A673 (cell line): ENCODE measurements at regions of chr19 and their contacts with region 1.

Region 1: DNA sequence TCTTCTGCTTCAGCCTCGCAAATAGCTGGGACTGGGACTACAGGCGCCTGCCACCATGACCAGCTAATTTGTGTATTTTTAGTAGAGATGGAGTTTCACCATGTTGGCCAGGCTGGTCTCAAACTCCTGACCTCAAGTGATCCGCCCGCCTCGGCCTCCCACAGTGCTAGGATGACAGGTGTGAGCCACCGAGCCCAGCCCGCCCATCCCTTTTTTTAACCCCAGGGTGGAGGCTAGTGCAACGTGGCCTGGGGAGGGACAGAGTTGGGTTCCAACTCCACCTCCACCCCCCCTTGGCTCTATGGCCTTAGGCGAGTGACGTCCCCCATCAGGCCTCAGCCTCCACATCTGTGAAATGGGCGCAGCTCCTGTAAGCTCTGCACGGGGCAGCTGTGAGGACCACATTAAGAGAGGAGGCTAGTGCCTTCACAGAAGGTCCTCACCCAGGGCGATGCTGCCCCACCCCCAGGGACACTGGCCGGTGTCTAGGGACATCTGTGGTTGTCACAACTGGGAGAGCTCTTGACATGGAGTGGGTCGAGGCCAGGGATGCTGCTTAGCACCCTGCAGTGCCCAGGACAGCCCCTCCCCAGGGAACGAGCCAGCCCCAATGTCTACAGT is 37.7 kb downstream of the SMIM24 start:
- DNase-seq: no peak
- H3K4me3 ChIP-seq: no peak overlapping the region
- H3K27ac ChIP-seq: no peak overlapping the region
- H3K4me1 ChIP-seq: peaks cover 6% of the 10 kb centered on the region
- H3K27me3 ChIP-seq: no peaks in the 10 kb centered on the region
- CTCF ChIP-seq: no peak

Region 2: GRCh38 chr19:3375221-3376090 is 67.1 kb before region 1 on chr19:
- CTCF ChIA-PET with region 1: no interaction called
- POLR2A ChIA-PET with region 1: interaction called, 15 read pairs
- intact Hi-C with region 1: no loop called
- DNase-seq: no peak
- H3K4me3 ChIP-seq: no peak overlapping the region
- H3K27ac ChIP-seq: peak overlapping the region; percentile 59
- H3K4me1 ChIP-seq: peaks cover 2% of the 10 kb centered on the region
- H3K27me3 ChIP-seq: no peaks in the 10 kb centered on the region
- CTCF ChIP-seq: no peak

Region 3: GRCh38 chr19:3380829-3381228 is 61.8 kb before region 1 on chr19:
- CTCF ChIA-PET with region 1: no interaction called
- POLR2A ChIA-PET with region 1: interaction called, 11 read pairs
- intact Hi-C with region 1: no loop called
- DNase-seq: no peak
- H3K4me3 ChIP-seq: no peak overlapping the region
- H3K27ac ChIP-seq: no peak overlapping the region
- H3K4me1 ChIP-seq: peaks cover 15% of the 10 kb centered on the region
- H3K27me3 ChIP-seq: no peaks in the 10 kb centered on the region
- CTCF ChIP-seq: no peak

Region 4: DNA sequence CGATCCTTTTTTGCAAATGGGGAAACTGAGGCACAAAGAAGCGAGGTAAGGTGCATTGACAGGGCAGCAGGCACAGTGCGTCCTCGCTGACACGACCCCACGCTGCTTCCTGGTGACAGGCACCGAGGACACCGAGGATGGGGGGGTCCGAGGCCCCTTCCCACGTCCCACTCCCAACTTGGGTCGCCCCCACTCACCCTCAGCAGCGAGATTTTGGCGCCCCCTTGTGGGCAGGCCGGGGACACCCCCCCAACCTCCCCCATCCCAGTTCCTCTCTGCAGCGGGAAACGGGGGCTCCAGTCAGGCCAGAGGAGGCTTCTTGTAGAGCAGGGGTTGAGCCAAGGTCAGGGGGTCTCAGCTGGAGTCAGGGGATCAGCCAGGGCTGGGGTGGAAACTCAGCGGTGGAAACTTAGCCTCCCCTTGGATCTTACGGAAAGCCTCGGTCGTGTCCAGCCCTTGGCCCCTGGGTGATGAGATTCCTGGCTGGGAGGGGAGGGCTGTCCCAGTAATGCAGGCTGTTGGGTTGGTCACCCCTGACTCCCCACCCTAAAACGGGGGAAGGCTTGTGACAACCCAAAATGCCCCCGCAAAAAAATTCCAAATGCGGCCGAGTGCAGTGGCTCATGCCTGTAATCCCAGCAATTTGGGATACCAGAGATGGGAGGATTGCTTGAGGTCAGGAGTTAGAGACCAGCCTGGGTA is 29.5 kb after region 1 on chr19:
- CTCF ChIA-PET with region 1: no interaction called
- POLR2A ChIA-PET with region 1: no interaction called
- intact Hi-C with region 1: no loop called
- DNase-seq: peak; percentile 46
- H3K4me3 ChIP-seq: no peak overlapping the region
- H3K27ac ChIP-seq: no peak overlapping the region
- H3K4me1 ChIP-seq: no peaks in the 10 kb centered on the region
- H3K27me3 ChIP-seq: peaks cover 3% of the 10 kb centered on the region
- CTCF ChIP-seq: peak; percentile 97

Region 5: DNA sequence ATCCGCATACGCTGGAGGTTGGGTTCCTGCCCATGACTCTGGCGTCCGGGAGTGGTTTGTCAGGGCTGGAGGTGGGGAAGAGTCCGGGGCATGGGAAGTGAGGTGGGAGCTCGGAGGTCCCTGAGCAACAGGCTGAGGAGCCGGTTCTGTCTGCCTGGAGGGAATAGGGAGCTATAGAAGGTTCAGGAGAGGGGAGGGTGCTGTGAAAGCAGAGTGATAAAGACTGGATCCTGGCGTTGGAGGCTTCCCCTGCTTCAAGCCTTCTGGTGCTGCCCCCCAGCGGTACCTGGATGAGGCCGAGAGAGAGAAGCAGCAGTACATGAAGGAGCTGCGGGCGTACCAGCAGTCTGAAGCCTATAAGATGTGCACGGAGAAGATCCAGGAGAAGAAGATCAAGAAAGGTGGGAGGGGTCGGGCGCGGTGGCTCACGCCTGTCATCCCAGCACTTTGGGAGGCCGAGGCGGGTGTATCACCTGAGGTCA is 132.7 kb after region 1 on chr19:
- CTCF ChIA-PET with region 1: no interaction called
- POLR2A ChIA-PET with region 1: no interaction called
- intact Hi-C with region 1: no loop called
- DNase-seq: no peak
- H3K4me3 ChIP-seq: no peak overlapping the region
- H3K27ac ChIP-seq: no peak overlapping the region
- H3K4me1 ChIP-seq: peaks cover 16% of the 10 kb centered on the region
- H3K27me3 ChIP-seq: no peaks in the 10 kb centered on the region
- CTCF ChIP-seq: no peak